ENCODE measurements at regions of chr11 and their contacts with region 1.

Region 1: DNA sequence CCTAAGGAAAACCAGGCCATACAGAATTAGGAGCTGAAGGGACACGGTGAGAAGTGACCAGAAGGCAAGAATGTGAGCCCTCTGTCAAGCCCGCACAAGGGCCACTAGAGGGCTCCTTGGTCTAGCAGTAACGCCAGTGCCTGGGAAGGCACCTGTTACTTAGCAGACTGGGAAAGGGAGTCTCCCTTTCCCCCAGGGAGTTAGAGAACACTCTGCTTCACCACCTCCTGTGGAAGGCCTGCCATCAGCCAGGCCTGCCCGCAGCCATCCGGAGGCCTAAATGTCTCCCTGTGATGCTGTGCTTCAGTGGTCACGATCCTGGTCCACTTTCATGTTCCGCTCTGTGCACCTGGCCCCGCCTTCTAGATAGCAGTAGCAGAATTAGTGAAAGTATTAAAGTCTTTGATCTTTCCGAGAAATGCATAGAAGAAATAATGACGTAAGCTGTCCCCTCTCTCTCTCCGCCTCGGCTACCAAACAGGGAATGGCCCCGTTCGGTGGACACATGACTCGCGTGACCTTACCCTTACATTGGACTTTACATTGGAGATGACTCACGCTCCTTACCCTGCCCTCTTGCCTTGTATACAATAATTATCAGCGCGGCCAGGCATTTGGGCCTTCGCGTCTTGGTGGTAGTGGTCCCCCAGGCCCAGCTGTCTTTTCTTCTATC is 10.7 kb upstream of the GSTP1 start:
- DNase-seq: no peak
- H3K4me3 ChIP-seq: no peak overlapping the region
- H3K27ac ChIP-seq: no peak overlapping the region
- H3K4me1 ChIP-seq: peaks cover 0 to 3% (median 0%) of the 10 kb centered on the region in 4 experiments; a peak in 1 of 7 replicates
- H3K27me3 ChIP-seq: no peaks in the 10 kb centered on the region; a peak in 1 of 7 replicates
- CTCF ChIP-seq: peak; percentile 72 to 76 (median 73)
- EP300 ChIP-seq: no peak
- POLR2A ChIP-seq: no peak
- RAD21 ChIP-seq: peak; percentile 75 to 78

Region 2: GRCh38 chr11:67452141-67452952 is 120.5 kb before region 1 on chr11 and contains the start of gene GPR152:
- CTCF ChIA-PET with region 1: no interaction called
- POLR2A ChIA-PET with region 1: no interaction called
- DNase-seq: no peak
- H3K4me3 ChIP-seq: no peak within 1 kb of the TSS
- H3K27ac ChIP-seq: no peak within 1 kb of the TSS
- H3K4me1 ChIP-seq: no peaks in the 10 kb centered on the region
- H3K27me3 ChIP-seq: no peaks in the 10 kb centered on the region
- CTCF ChIP-seq: no peak
- EP300 ChIP-seq: no peak
- POLR2A ChIP-seq: no peak
- RAD21 ChIP-seq: no peak
- total RNA-seq, gene GPR152: not detected in 2 replicates

Region 3: GRCh38 chr11:67534070-67534679 is 38.7 kb before region 1 on chr11:
- CTCF ChIA-PET with region 1: no interaction called
- POLR2A ChIA-PET with region 1: no interaction called
- DNase-seq: no peak
- H3K4me3 ChIP-seq: no peak overlapping the region
- H3K27ac ChIP-seq: no peak overlapping the region
- H3K4me1 ChIP-seq: no peaks in the 10 kb centered on the region; a peak in 1 of 7 replicates
- H3K27me3 ChIP-seq: no peaks in the 10 kb centered on the region
- CTCF ChIP-seq: no peak
- EP300 ChIP-seq: no peak
- POLR2A ChIP-seq: no peak
- RAD21 ChIP-seq: no peak

Region 4: GRCh38 chr11:67592880-67593564 is 20.1 kb after region 1 on chr11:
- CTCF ChIA-PET with region 1: interaction called, 14 read pairs
- POLR2A ChIA-PET with region 1: interaction called, 5 read pairs
- DNase-seq: peak in 1 of 2 experiments; percentile 44
- H3K4me3 ChIP-seq: no peak overlapping the region
- H3K27ac ChIP-seq: no peak overlapping the region
- H3K4me1 ChIP-seq: peaks cover 0 to 3% (median 1%) of the 10 kb centered on the region in 4 experiments; a peak in 1 of 7 replicates
- H3K27me3 ChIP-seq: no peaks in the 10 kb centered on the region; a peak in 1 of 7 replicates
- CTCF ChIP-seq: no peak
- EP300 ChIP-seq: no peak
- POLR2A ChIP-seq: no peak
- RAD21 ChIP-seq: no peak

Region 5: DNA sequence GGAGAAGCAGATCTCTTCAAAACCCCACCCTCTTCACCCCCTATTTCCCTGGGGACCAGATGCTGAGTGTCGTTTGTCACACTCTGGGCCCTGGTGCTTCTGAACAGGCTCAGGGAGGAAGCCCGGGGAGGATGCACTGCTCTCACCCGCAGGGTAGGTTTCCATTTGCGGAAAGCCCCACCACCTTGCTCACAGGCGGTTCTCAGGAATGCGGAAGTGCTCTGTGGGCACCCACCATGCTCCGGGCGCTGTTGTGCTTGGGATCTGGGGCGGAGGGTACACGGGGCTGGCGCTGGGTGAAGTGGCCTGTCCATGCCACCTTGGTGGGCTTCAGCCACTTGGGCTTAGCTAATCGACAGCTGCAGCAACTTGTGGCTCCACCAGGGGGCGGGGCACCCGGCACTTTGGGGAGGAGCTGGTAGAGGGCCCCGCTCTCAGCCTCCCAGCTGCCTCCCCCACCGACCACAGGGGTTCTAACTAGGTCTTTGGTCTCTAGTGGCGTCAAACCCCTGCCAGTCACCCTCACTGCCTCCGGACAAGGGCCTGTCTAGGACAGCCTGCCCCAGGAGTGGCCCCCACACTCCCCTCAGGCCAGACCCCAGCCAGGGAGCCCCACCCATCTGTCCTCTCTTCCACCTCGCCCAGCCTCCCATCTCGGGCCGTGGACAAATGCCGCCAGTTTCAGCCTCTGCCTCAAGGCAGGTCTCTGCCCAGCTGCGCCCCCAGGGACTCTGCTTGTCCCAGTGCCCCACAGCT is 41.3 kb after region 1 on chr11:
- CTCF ChIA-PET with region 1: interaction called, 97 read pairs
- POLR2A ChIA-PET with region 1: interaction called, 5 read pairs
- DNase-seq: peak in 1 of 2 experiments; percentile 93
- H3K4me3 ChIP-seq: peak overlapping the region in 1 of 4 experiments; percentile 18; a peak in 1 of 8 replicates
- H3K27ac ChIP-seq: no peak overlapping the region
- H3K4me1 ChIP-seq: peaks cover 13 to 36% (median 31%) of the 10 kb centered on the region in 4 experiments
- H3K27me3 ChIP-seq: peaks cover 0 to 10% (median 5%) of the 10 kb centered on the region in 4 experiments; a peak in 6 of 7 replicates
- CTCF ChIP-seq: peak in 2 of 3 experiments; percentile 77 to 79; a peak in 3 of 4 replicates
- EP300 ChIP-seq: no peak
- POLR2A ChIP-seq: no peak
- RAD21 ChIP-seq: peak; percentile 24 to 45

Region 6: DNA sequence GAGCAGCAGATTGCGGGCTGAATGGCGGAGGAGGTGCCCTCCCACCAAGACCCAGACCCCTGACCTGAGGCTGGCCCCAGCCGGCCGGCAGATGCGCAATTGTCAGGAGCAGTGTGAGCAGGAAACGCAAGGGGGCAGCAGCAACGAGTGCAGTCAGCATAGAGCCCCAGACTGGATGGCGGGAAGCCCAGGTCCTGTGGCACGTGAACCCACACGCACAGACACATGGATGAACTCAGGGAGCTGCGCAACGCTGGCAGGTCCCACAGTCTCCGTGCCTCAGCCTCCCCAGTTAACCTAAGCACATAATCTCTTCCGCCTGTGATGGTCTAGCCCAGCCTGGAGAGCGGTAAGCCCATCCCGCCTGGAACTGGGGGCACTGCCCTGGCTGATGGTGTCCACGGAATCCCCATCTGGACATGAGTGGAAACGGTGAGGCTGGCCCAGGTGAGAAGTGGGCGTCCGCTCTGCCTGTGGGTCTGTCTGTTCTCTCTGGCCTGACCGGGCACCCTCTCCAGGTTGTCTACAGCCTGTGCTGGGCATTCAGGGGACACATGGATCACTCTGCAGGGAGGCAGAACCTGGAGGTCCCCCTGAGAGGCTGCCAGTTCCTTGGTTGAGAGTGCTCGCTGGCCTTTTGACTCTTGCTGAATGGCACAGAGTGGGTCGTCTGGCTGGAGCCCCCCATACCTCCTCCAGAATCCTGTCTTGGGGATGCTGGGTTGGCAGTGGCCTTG is 67.3 kb after region 1 on chr11:
- CTCF ChIA-PET with region 1: interaction called, 11 read pairs
- POLR2A ChIA-PET with region 1: no interaction called
- DNase-seq: peak in 1 of 2 experiments; percentile 89
- H3K4me3 ChIP-seq: no peak overlapping the region
- H3K27ac ChIP-seq: no peak overlapping the region
- H3K4me1 ChIP-seq: peaks cover 0 to 2% (median under 1%) of the 10 kb centered on the region in 4 experiments; a peak in 1 of 7 replicates
- H3K27me3 ChIP-seq: peaks cover 8 to 28% (median 15%) of the 10 kb centered on the region in 4 experiments
- CTCF ChIP-seq: peak in 2 of 3 experiments; percentile 85 to 93; a peak in 3 of 4 replicates
- EP300 ChIP-seq: no peak
- POLR2A ChIP-seq: no peak
- RAD21 ChIP-seq: peak; percentile 70 to 73